A549 (cell line): ENCODE measurements at regions of chr12 and their contacts with region 1.

Region 1: DNA sequence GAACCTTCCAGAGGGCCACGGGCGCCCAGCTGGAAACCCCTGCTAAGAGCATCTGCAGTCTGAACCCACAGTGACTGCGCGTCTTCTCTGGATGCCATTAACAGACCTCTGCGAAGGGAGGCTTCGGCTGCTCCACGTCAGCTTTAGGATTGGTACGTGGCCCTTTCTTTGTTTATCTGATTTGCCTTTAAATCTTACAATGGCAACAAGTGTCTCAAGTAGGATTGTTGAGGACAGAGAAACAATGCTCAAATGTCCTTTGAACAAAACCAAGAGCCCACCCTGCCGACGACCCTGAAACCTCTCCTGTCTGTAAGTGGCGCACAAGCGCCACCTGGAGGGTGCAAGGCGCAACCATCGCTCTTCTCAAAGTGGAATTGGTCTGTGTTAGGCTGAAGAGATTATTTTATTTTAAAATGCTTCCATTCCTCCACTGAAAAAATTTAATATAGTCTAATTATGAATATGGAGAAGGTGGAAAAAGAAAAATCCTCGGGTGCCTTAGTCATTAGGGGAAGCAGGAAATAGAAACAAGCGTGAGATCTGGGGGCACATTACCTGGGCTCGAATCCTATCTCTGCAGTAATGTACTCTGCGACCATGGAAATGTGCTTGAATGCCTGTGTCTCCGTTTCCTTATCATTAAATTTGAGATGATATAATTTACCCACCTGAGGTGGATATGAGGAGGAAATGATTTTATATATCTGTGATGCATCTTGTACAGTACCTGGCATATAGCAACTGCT is 82.6 kb upstream of the PTPRB start:
- DNase-seq: peak in 1 of 2 experiments; percentile 13
- ATAC-seq: peak; percentile 70 to 90; a peak in 3 of 6 replicates
- H3K4me3 ChIP-seq: no peak overlapping the region
- H3K27ac ChIP-seq: no peak overlapping the region
- H3K4me1 ChIP-seq: no peaks in the 10 kb centered on the region
- CTCF ChIP-seq: peak; percentile 86
- EP300 ChIP-seq: no peak
- POLR2A ChIP-seq: no peak
- RAD21 ChIP-seq: peak; percentile 89 to 93

Region 2: DNA sequence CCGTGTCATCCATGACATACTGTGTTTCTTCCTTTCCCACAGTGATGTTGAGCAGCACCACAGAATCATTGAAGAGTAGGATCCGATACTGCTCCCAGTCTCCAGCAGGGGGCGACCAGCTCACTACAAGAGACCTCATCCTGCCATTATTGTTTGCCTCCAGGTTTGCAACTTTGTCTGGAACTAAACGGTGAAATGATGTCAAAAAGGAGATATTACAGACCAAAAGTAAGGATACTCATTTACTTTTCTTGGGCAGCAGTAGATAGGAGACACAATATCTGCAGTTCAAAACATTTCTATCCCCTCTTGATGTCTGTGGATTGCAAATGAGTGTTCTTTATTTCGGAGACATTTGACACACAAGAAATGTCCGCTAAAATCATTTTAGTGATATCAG is 129.8 kb before region 1 on chr12:
- CTCF ChIA-PET with region 1: interaction called, 38 read pairs
- POLR2A ChIA-PET with region 1: no interaction called
- DNase-seq: peak; percentile 60 to 77
- ATAC-seq: peak; percentile 95 to 99
- H3K4me3 ChIP-seq: no peak overlapping the region
- H3K27ac ChIP-seq: no peak overlapping the region
- H3K4me1 ChIP-seq: no peaks in the 10 kb centered on the region
- CTCF ChIP-seq: peak; percentile 84
- EP300 ChIP-seq: no peak
- POLR2A ChIP-seq: no peak
- RAD21 ChIP-seq: peak; percentile 88 to 90